ENCODE measurements at regions of chr2 and their contacts with region 1.

Region 1: GRCh38 chr2:38602732-38603401 is at the start of gene HNRNPLL:
- DNase-seq: peak; percentile 97
- CTCF ChIP-seq: peak; percentile 8

Region 2: DNA sequence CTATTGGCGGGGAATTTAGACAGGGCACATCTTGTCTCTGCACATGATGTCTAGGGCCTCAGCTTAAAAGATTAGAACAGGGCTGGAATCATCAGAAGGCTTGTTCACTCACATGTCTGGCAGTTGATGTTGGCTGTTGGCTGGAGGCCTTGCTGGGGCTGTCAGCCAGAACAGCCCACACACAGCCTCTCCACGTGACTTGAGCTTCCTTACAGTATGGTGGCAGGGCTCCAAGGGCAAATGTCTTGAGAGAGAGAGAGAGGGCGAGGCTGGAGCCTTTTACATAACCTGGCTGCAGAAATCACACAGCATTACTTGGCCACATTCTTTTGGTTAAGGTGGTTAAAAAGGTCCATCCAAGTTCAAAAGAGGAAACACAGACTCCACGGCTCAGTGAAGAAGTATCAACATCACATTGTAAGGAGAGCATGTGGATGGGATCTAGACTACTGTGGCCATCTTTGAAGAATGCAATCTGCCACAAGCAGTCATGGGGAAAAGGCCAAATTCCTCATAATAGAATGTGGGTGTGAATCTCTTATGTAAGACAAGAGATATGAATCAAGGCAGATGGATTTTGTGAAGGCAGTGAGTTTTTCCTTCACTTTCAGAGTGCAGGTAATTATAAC is 117.9 kb after region 1 on chr2:
- in situ Hi-C with region 1: loop called (anchors 10 kb)
- DNase-seq: no peak
- CTCF ChIP-seq: no peak